ENCODE measurements at regions of chr2 and their contacts with region 1.

Region 1: DNA sequence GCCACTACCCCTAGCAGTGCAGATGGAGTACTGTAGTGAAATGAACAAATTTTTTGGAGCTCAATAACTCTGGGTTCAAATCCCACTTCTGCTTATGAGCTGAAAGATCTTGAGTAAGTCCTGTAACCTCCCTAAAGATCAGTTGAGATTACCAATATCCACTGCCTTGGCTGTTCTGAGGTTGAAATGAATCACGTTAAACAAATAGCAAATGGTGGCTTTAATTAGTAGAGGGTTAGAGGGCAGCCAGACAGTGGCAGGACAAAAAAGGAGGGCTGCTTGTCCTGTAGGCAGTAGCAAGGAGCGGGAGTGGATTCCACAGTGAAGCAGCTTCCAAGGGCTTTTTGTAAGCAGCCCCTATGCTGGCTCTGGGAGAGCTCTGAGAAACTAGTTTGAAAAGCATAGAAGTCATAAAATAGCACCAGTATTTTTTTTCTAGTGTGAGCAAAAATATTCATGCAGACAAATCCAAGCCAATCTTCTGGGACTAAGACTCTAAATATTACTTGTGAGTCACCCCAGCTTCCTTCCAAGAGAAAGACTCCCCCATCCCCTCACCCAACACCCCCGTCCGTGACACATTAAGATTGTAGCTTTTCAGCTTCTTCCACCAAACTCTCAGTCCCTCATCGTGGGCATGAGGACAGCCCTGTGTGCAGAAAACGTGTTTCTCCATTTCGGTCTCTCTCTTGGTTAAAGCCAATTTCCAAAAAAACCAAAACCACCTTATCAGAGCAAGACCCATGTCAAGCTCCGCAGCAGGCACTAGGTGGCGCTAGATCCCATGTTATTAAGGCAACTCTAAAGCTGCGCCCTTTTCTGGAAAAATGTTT is 123.5 kb upstream of the LGALSL start:
- DNase-seq: peak; percentile 81
- H3K4me3 Mint-ChIP-seq: peak overlapping the region; percentile 49
- H3K27ac Mint-ChIP-seq: peak overlapping the region; percentile 64
- H3K4me1 Mint-ChIP-seq: peaks cover 6% of the 10 kb centered on the region
- H3K27me3 Mint-ChIP-seq: no peaks in the 10 kb centered on the region
- CTCF ChIP-seq: peak; percentile 94

Region 2: GRCh38 chr2:64052468-64053241 is 277.8 kb before region 1 on chr2:
- CTCF ChIA-PET with region 1: interaction called, 29 read pairs
- POLR2A ChIA-PET with region 1: interaction called, 9 read pairs
- intact Hi-C with region 1: loop called (anchors 1 kb)
- DNase-seq: no peak
- H3K4me3 Mint-ChIP-seq: no peak overlapping the region
- H3K27ac Mint-ChIP-seq: no peak overlapping the region
- H3K4me1 Mint-ChIP-seq: peaks cover 23% of the 10 kb centered on the region
- H3K27me3 Mint-ChIP-seq: no peaks in the 10 kb centered on the region
- CTCF ChIP-seq: no peak

Region 3: GRCh38 chr2:64342195-64343099 is 11.9 kb after region 1 on chr2:
- CTCF ChIA-PET with region 1: interaction called, 13 read pairs
- POLR2A ChIA-PET with region 1: interaction called, 3 read pairs
- intact Hi-C with region 1: no loop called
- DNase-seq: no peak
- H3K4me3 Mint-ChIP-seq: no peak overlapping the region
- H3K27ac Mint-ChIP-seq: no peak overlapping the region
- H3K4me1 Mint-ChIP-seq: no peaks in the 10 kb centered on the region
- H3K27me3 Mint-ChIP-seq: no peaks in the 10 kb centered on the region
- CTCF ChIP-seq: no peak

Region 4: GRCh38 chr2:64488050-64488974 is 157.8 kb after region 1 on chr2:
- CTCF ChIA-PET with region 1: interaction called, 257 read pairs
- POLR2A ChIA-PET with region 1: interaction called, 9 read pairs
- intact Hi-C with region 1: loop called (anchors 1 kb)
- DNase-seq: peak; percentile 72
- H3K4me3 Mint-ChIP-seq: no peak overlapping the region
- H3K27ac Mint-ChIP-seq: no peak overlapping the region
- H3K4me1 Mint-ChIP-seq: peaks cover 27% of the 10 kb centered on the region
- H3K27me3 Mint-ChIP-seq: no peaks in the 10 kb centered on the region
- CTCF ChIP-seq: peak; percentile 92

Region 5: DNA sequence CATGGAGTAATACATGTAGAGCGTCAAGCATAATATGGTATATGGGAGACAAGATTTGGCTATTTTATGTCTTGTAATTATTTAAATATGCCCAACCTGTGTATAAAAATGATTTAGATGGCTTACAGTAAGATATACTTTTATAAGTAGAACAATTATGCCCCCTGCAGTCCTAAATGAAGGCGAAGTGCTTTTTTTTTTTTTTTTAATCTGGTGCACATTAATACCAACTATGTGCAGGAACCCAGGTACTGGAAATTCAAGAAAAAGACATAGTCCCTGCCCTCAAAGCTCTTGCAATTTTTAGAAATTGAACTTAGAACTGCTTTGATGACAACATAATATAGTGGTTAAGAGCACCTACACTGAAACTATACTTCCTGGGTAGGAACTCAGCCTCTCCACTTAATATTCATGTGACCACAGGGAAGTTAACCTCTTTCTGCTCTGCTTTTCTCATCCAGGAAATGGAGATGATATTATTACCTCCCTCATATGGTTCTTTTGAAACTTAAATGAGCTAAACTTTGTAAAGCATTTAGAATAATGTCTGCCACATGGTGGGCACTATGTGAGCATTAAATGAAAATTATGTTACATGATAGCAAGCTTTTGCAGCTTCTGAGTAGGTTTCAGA is 231.8 kb after region 1 on chr2:
- CTCF ChIA-PET with region 1: interaction called, 48 read pairs
- POLR2A ChIA-PET with region 1: interaction called, 9 read pairs
- intact Hi-C with region 1: loop called (anchors 1 kb)
- DNase-seq: peak; percentile 34
- H3K4me3 Mint-ChIP-seq: no peak overlapping the region
- H3K27ac Mint-ChIP-seq: no peak overlapping the region
- H3K4me1 Mint-ChIP-seq: peaks cover 9% of the 10 kb centered on the region
- H3K27me3 Mint-ChIP-seq: no peaks in the 10 kb centered on the region
- CTCF ChIP-seq: peak; percentile 27

Region 6: DNA sequence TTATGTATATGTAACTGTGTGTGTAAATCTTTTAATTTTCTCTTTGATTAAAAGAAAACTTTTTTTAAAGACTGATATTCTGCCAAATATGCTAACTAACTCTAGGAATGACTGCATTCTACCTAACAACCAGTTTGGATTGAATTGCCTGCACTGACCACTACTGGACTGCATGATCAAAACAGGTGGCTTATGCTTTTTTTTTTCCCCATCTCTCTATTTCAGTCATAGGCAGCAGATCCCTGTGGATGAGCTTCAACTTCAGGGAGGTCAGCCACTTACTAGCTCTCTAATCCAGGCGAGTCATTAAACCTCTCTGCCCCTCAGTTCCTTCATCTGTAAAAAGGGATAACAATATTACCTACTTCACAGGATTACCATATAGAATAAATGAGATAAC is 461.8 kb after region 1 on chr2:
- CTCF ChIA-PET with region 1: no interaction called
- POLR2A ChIA-PET with region 1: no interaction called
- intact Hi-C with region 1: no loop called
- DNase-seq: no peak
- H3K4me3 Mint-ChIP-seq: no peak overlapping the region
- H3K27ac Mint-ChIP-seq: no peak overlapping the region
- H3K4me1 Mint-ChIP-seq: peaks cover 9% of the 10 kb centered on the region
- H3K27me3 Mint-ChIP-seq: no peaks in the 10 kb centered on the region
- CTCF ChIP-seq: no peak

Region 7: DNA sequence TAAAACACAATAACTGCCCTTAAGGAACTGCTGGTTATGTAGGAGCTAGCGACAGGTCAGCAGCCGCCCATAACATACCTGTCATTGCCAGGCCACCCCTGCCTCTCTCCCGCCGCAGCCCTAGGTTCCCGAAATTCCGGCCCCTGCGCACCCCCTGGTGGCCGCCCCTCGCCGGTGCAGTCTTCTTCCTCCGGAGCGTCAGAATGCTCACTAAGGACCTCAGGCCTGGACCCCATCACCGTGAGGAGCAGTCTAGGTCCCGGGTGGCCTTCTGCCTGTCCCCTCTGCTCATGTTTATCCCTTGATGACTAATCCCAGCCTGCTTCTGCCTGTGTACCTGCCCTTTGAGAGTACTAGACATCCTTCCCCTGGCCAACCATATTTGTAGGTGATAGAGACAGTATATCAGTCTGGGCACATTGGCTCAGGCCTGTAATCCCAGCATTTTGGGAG is 543.0 kb after region 1 on chr2:
- CTCF ChIA-PET with region 1: interaction called, 11 read pairs
- POLR2A ChIA-PET with region 1: interaction called, 3 read pairs
- intact Hi-C with region 1: loop called (anchors 5 kb)
- DNase-seq: peak; percentile 74
- H3K4me3 Mint-ChIP-seq: no peak overlapping the region
- H3K27ac Mint-ChIP-seq: no peak overlapping the region
- H3K4me1 Mint-ChIP-seq: peaks cover 15% of the 10 kb centered on the region
- H3K27me3 Mint-ChIP-seq: no peaks in the 10 kb centered on the region
- CTCF ChIP-seq: peak; percentile 93

Measured in MCF 10A (cell line).